Aorta (tissue), 5 donors: ENCODE measurements at regions of chr6 and their contacts with region 1.

Region 1: GRCh38 chr6:106512048-106512967 is 117.0 kb downstream of the RTN4IP1 start:
- DNase-seq: peak; percentile 82 to 91
- ATAC-seq: peak; percentile 82
- H3K4me3 ChIP-seq: peak overlapping the region; percentile 42 to 60
- H3K27ac ChIP-seq: no peak overlapping the region
- H3K4me1 ChIP-seq: peaks cover 0 to 1% of the 10 kb centered on the region in 2 donors
- H3K27me3 ChIP-seq: no peaks in the 10 kb centered on the region

Region 2: GRCh38 chr6:106339334-106340029 is 172.8 kb before region 1 on chr6:
- intact Hi-C with region 1: no loop called
- DNase-seq: no peak
- ATAC-seq: peak; percentile 74
- H3K4me3 ChIP-seq: no peak overlapping the region
- H3K27ac ChIP-seq: no peak overlapping the region
- H3K4me1 ChIP-seq: peaks cover 0 to 2% of the 10 kb centered on the region in 2 donors
- H3K27me3 ChIP-seq: peaks cover 0 to 1% of the 10 kb centered on the region in 2 donors

Region 3: GRCh38 chr6:106546691-106547414 is 34.5 kb after region 1 on chr6:
- intact Hi-C with region 1: loop called in 1 of 2 experiments (anchors 2 kb)
- DNase-seq: no peak
- ATAC-seq: no peak
- H3K4me3 ChIP-seq: no peak overlapping the region
- H3K27ac ChIP-seq: no peak overlapping the region
- H3K4me1 ChIP-seq: peaks cover 3 to 4% of the 10 kb centered on the region in 2 donors
- H3K27me3 ChIP-seq: no peaks in the 10 kb centered on the region